Transverse colon (tissue), 4 donors: ENCODE measurements at regions of chr2 and their contacts with region 1.

Region 1: GRCh38 chr2:101341901-101342624 is 33.6 kb upstream of the RNF149 start:
- DNase-seq: peak; percentile 78
- H3K4me3 ChIP-seq: no peak overlapping the region
- H3K27ac ChIP-seq: no peak overlapping the region
- H3K4me1 ChIP-seq: no peaks in the 10 kb centered on the region
- H3K27me3 ChIP-seq: no peaks in the 10 kb centered on the region
- CTCF ChIP-seq: peak; percentile 70 to 83 (median 78)
- EP300 ChIP-seq: no peak
- POLR2A ChIP-seq: no peak

Region 2: GRCh38 chr2:101230541-101230993 is 111.5 kb before region 1 on chr2:
- in situ Hi-C with region 1: no loop called
- intact Hi-C with region 1: no loop called
- DNase-seq: no peak
- H3K4me3 ChIP-seq: no peak overlapping the region
- H3K27ac ChIP-seq: no peak overlapping the region
- H3K4me1 ChIP-seq: peaks cover 0 to 4% (median 0%) of the 10 kb centered on the region in 4 donors
- H3K27me3 ChIP-seq: no peaks in the 10 kb centered on the region
- CTCF ChIP-seq: no peak
- EP300 ChIP-seq: no peak
- POLR2A ChIP-seq: no peak

Region 3: DNA sequence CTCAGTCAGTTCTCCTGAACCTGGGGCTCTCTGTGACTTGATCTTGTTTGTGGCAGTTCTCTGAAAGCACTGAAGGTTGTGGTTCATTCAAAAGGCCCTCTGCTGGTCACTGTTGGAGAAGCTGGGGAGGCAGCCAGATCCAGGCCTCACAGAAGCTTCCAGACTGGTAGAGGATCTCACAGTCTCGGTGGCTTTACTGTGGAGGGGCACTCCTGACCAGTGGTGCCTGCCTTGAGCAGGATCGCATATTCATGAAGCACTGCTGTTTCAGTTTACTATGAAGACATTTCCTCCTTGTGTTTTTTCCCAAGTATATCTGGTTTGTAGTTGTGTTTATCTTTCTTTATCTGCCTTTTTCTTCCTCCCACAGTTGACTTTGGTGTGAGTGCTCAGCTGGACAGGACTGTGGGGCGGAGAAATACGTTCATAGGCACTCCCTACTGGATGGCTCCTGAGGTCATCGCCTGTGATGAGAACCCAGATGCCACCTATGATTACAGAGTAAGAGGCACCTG is 489.3 kb after region 1 on chr2:
- in situ Hi-C with region 1: no loop called
- intact Hi-C with region 1: no loop called
- DNase-seq: peak; percentile 72
- H3K4me3 ChIP-seq: no peak overlapping the region
- H3K27ac ChIP-seq: peak overlapping the region; percentile 5 to 55 (median 15)
- H3K4me1 ChIP-seq: peaks cover 0 to 31% (median 4%) of the 10 kb centered on the region in 4 donors
- H3K27me3 ChIP-seq: no peaks in the 10 kb centered on the region
- CTCF ChIP-seq: peak; percentile 66 to 76 (median 73)
- EP300 ChIP-seq: no peak
- POLR2A ChIP-seq: no peak

Region 4: GRCh38 chr2:101844055-101844635 is 502.1 kb after region 1 on chr2:
- in situ Hi-C with region 1: loop called in 1 of 4 experiments (anchors 10 kb)
- intact Hi-C with region 1: no loop called
- DNase-seq: no peak
- H3K4me3 ChIP-seq: no peak overlapping the region
- H3K27ac ChIP-seq: peak overlapping the region in 2 of 4 donors; percentile 24 to 26
- H3K4me1 ChIP-seq: peaks cover 0 to 6% (median 2%) of the 10 kb centered on the region in 4 donors
- H3K27me3 ChIP-seq: no peaks in the 10 kb centered on the region
- CTCF ChIP-seq: no peak
- EP300 ChIP-seq: no peak
- POLR2A ChIP-seq: no peak